ENCODE measurements at regions of chr21 and their contacts with region 1.

Region 1: GRCh38 chr21:15483138-15483780 is 246.5 kb upstream of the USP25 start:
- DNase-seq: peak; percentile 92
- H3K4me3 Mint-ChIP-seq: no peak overlapping the region
- H3K27ac Mint-ChIP-seq: no peak overlapping the region
- H3K4me1 Mint-ChIP-seq: peaks cover 17% of the 10 kb centered on the region
- H3K27me3 Mint-ChIP-seq: peaks cover 3% of the 10 kb centered on the region

Region 2: GRCh38 chr21:14864211-14865021 is 618.8 kb before region 1 on chr21:
- intact Hi-C with region 1: loop called (anchors 1 kb)
- DNase-seq: peak; percentile 82
- H3K4me3 Mint-ChIP-seq: no peak overlapping the region
- H3K27ac Mint-ChIP-seq: no peak overlapping the region
- H3K4me1 Mint-ChIP-seq: peaks cover 6% of the 10 kb centered on the region
- H3K27me3 Mint-ChIP-seq: peaks cover 4% of the 10 kb centered on the region

Region 3: DNA sequence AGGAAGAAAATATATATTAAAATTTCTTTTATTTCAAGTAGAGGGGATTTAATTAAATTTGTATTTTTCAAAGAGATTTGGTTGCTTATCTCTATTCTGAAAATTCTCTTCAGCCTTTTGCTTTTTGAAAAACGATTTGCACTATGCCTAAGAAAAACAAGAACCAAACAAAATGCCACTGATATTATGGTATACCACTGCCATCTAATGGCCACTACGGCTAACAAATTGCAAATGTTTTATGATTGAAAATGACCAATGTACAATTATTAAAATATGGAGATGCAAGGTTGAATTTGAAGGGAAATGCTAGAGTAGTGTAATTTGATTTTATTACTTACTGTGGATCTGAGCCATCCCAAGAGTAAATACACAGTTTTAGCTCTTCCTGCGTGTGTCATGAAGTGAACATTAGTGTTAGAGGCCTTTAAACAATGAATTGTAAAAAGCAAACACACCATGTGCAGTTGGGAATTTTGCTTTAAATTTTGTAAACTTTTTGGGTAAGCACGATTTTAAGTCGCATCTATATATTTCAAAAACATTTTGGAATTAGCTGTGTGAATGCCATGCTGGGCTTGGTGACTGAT is 109.1 kb after region 1 on chr21:
- intact Hi-C with region 1: loop called (anchors 10 kb)
- DNase-seq: peak; percentile 67
- H3K4me3 Mint-ChIP-seq: no peak overlapping the region
- H3K27ac Mint-ChIP-seq: no peak overlapping the region
- H3K4me1 Mint-ChIP-seq: no peaks in the 10 kb centered on the region
- H3K27me3 Mint-ChIP-seq: peaks cover 16% of the 10 kb centered on the region